Ovary (tissue), 10 donors: ENCODE measurements at regions of chr22 and their contacts with region 1.

Region 1: GRCh38 chr22:30591588-30592359 is at the start of gene PES1:
- DNase-seq: peak; percentile 94 to 97 (median 96)
- H3K4me3 ChIP-seq: peak within 1 kb of the TSS; percentile 91
- H3K27ac ChIP-seq: peak within 1 kb of the TSS in 1 of 2 donors; percentile 74
- H3K4me1 ChIP-seq: peaks cover 9% of the 10 kb centered on the region
- H3K27me3 ChIP-seq: no peaks in the 10 kb centered on the region
- CTCF ChIP-seq: no peak
- EP300 ChIP-seq: no peak
- POLR2A ChIP-seq: peak; percentile 23
- total RNA-seq, gene PES1: 29.0 to 82.3 (median 63.7) TPM

Region 2: GRCh38 chr22:30423982-30424963 is 167.5 kb before region 1 on chr22:
- intact Hi-C with region 1: loop called in 1 of 4 experiments (anchors 10 kb)
- DNase-seq: peak; percentile 98 to 99 (median 99)
- H3K4me3 ChIP-seq: peak overlapping the region; percentile 55
- H3K27ac ChIP-seq: peak overlapping the region; percentile 37 to 97
- H3K4me1 ChIP-seq: peaks cover 6% of the 10 kb centered on the region
- H3K27me3 ChIP-seq: no peaks in the 10 kb centered on the region
- CTCF ChIP-seq: peak in 1 of 3 donors; percentile 6
- EP300 ChIP-seq: peak; percentile 76
- POLR2A ChIP-seq: peak; percentile 22